ENCODE measurements at regions of chr1 and their contacts with region 1.

Region 1: GRCh38 chr1:64823691-64824476 is 79.0 kb downstream of the RAVER2 start:
- DNase-seq: peak; percentile 83
- H3K4me3 Mint-ChIP-seq: no peak overlapping the region
- H3K27ac Mint-ChIP-seq: peak overlapping the region; percentile 5
- H3K4me1 Mint-ChIP-seq: peaks cover 33% of the 10 kb centered on the region
- H3K27me3 Mint-ChIP-seq: no peaks in the 10 kb centered on the region

Region 2: GRCh38 chr1:64231153-64231552 is 592.7 kb before region 1 on chr1:
- CTCF ChIA-PET with region 1: no interaction called
- intact Hi-C with region 1: no loop called
- DNase-seq: no peak
- H3K4me3 Mint-ChIP-seq: no peak overlapping the region
- H3K27ac Mint-ChIP-seq: no peak overlapping the region
- H3K4me1 Mint-ChIP-seq: no peaks in the 10 kb centered on the region
- H3K27me3 Mint-ChIP-seq: peaks cover 22% of the 10 kb centered on the region

Region 3: GRCh38 chr1:64553281-64553680 is 270.6 kb before region 1 on chr1:
- CTCF ChIA-PET with region 1: no interaction called
- intact Hi-C with region 1: loop called (anchors 1 kb)
- DNase-seq: no peak
- H3K4me3 Mint-ChIP-seq: no peak overlapping the region
- H3K27ac Mint-ChIP-seq: no peak overlapping the region
- H3K4me1 Mint-ChIP-seq: peaks cover 41% of the 10 kb centered on the region
- H3K27me3 Mint-ChIP-seq: no peaks in the 10 kb centered on the region

Region 4: DNA sequence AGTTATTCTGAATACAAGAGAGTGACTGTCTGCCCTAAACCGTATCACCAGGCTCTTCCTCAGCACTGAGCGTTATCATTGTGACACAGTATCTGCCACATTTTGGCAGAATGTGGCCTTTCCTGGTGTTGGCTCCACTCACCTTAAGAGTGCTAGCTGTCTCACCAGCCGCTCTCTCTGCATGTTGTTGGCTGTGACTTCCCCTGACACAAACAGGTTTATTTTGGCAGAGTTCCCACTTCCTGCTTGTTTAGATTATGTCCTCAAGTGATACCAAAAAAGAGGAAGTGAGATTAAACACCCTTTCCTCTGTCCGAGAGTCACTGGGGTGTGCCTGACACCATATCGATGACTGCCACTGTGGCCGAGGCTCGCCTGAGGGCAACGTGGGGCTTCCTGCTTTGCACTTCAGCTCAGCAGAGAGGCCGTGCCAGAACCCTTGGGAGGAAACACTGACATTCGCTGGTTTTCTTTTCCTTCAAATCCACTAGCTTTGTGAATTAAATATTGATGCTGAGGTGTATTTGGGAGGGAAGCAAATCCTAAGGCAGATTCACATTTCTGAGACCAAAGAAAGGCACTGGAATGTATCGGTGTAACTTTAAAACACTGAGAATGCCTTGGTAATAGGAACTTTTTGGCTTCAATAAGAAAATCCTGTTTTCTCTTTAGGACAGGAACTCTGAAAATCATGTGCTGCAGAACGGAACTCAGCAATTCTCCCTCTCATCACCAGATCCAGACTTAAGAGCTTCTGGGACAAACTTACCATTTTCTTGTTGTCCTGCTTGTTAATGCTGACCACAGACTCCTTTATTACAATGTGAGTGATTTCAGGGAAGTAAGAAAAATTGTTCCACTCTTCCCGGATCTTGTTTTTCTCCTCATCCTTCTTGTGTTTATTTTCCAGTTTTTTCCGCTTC is 40.4 kb after region 1 on chr1:
- CTCF ChIA-PET with region 1: no interaction called
- intact Hi-C with region 1: loop called (anchors 1 kb)
- DNase-seq: peak; percentile 60
- H3K4me3 Mint-ChIP-seq: no peak overlapping the region
- H3K27ac Mint-ChIP-seq: peak overlapping the region; percentile 63
- H3K4me1 Mint-ChIP-seq: peaks cover 19% of the 10 kb centered on the region
- H3K27me3 Mint-ChIP-seq: no peaks in the 10 kb centered on the region

Region 5: GRCh38 chr1:64966158-64966971 is 142.5 kb after region 1 on chr1 and contains the start of gene JAK1:
- CTCF ChIA-PET with region 1: no interaction called
- intact Hi-C with region 1: loop called (anchors 1 kb)
- DNase-seq: peak; percentile 87
- H3K4me3 Mint-ChIP-seq: peak within 1 kb of the TSS; percentile 89
- H3K27ac Mint-ChIP-seq: peak within 1 kb of the TSS; percentile 90
- H3K4me1 Mint-ChIP-seq: peaks cover 46% of the 10 kb centered on the region
- H3K27me3 Mint-ChIP-seq: no peaks in the 10 kb centered on the region
- total RNA-seq, gene JAK1: 139 to 140 TPM

Region 6: GRCh38 chr1:65067491-65068201 is 243.8 kb after region 1 on chr1:
- CTCF ChIA-PET with region 1: interaction called, 4 read pairs
- intact Hi-C with region 1: loop called (anchors 1 kb)
- DNase-seq: peak; percentile 71
- H3K4me3 Mint-ChIP-seq: peak overlapping the region; percentile 87
- H3K27ac Mint-ChIP-seq: peak overlapping the region; percentile 95
- H3K4me1 Mint-ChIP-seq: peaks cover 51% of the 10 kb centered on the region
- H3K27me3 Mint-ChIP-seq: no peaks in the 10 kb centered on the region

Region 7: DNA sequence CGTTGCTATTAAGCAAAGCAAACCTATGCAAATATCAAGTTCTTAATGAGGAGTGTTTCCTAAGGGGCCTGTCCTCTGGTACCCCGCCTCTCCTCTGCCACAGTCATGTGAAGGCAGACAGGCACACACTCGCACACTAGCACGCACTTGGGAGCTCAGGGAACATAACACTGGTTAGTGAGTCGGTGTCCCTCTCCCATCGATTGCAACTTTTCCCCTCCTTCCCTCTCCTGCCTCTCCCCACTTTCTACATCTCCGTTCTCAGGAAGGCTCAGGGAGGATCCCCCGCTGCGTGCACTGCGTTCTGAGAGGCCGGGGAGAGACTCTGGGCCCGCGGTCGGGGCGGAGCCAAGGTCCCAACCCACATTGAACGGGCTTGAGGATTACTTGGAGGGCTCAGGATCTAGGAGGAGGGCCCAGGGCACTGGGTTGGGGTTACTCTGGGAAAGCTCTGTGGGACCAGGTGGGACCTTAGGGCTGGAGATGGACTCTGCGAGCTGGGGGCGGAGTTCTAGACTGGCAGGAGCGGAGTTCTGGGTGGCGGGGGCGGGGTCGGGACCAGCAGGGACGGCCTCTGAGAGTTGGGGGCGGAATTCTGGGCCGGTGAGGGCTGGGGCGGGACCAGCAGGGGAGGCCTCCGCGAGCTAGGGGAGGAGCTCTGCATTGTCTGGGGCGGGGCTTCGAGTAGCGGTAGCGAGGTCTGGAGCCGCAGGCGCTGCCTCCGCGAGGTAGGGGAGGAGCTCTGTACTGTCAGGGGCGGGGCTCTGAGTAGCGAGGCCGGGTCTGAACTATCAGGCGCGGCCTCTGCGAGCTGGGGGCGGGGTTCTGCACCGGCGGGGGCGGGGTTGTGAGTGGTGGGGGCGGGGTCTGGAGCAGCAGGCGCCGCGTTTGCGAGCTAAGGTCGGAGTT is 596.1 kb after region 1 on chr1:
- CTCF ChIA-PET with region 1: no interaction called
- intact Hi-C with region 1: loop called (anchors 5 kb)
- DNase-seq: peak; percentile 99
- H3K4me3 Mint-ChIP-seq: no peak overlapping the region
- H3K27ac Mint-ChIP-seq: peak overlapping the region; percentile 89
- H3K4me1 Mint-ChIP-seq: peaks cover 20% of the 10 kb centered on the region
- H3K27me3 Mint-ChIP-seq: no peaks in the 10 kb centered on the region